ENCODE measurements at regions of chr2 and their contacts with region 1.

Region 1: GRCh38 chr2:158903711-158904443 is 64.6 kb upstream of the TANC1 start:
- DNase-seq: no peak
- ATAC-seq: no peak
- H3K4me3 Mint-ChIP-seq: no peak overlapping the region
- H3K27ac Mint-ChIP-seq: no peak overlapping the region
- H3K4me1 Mint-ChIP-seq: no peaks in the 10 kb centered on the region
- H3K27me3 Mint-ChIP-seq: no peaks in the 10 kb centered on the region

Region 2: GRCh38 chr2:158835431-158835830 is 68.4 kb before region 1 on chr2:
- CTCF ChIA-PET with region 1: no interaction called
- POLR2A ChIA-PET with region 1: no interaction called
- intact Hi-C with region 1: no loop called
- DNase-seq: no peak
- ATAC-seq: no peak
- H3K4me3 Mint-ChIP-seq: no peak overlapping the region
- H3K27ac Mint-ChIP-seq: no peak overlapping the region
- H3K4me1 Mint-ChIP-seq: no peaks in the 10 kb centered on the region
- H3K27me3 Mint-ChIP-seq: peaks cover under 1% of the 10 kb centered on the region

Region 3: DNA sequence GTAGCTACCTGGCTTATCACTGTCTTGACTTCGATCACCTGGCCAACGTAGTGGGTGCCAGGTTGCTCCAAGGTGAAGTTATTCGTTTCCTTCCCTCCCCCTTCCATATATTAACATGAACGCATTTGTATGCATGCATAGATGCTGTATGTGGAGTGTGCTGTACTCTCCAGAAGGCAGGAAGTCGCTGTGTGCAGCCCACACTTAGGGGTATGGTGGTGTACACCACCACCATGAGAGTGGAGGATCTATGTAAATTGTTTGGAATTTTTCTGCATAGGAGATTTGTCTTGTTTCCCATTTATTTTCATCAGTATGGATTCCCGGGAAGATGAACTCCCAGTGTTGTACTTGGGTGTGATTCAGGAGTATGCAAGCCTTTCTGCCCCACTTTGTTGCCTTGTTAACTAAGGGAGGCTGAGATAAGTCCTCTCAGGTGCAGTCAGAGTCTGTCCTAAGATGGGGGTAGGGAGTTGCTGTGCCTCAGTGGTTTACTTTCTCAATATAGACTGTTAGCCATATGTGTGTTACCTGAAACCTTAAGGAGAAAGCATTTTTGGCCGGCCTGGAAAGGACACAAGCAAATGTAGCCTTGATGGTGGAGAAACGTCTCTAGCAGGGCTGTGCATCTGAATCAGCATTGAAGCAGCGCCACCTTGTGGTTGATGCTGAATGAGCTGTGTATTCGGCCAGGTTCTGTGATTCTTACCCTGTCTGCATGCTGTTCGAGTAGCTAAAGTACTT is 214.4 kb after region 1 on chr2:
- CTCF ChIA-PET with region 1: interaction called, 33 read pairs
- POLR2A ChIA-PET with region 1: no interaction called
- intact Hi-C with region 1: loop called (anchors 1 kb)
- DNase-seq: peak; percentile 91
- ATAC-seq: peak; percentile 84
- H3K4me3 Mint-ChIP-seq: no peak overlapping the region
- H3K27ac Mint-ChIP-seq: no peak overlapping the region
- H3K4me1 Mint-ChIP-seq: peaks cover 6% of the 10 kb centered on the region
- H3K27me3 Mint-ChIP-seq: no peaks in the 10 kb centered on the region

Region 4: DNA sequence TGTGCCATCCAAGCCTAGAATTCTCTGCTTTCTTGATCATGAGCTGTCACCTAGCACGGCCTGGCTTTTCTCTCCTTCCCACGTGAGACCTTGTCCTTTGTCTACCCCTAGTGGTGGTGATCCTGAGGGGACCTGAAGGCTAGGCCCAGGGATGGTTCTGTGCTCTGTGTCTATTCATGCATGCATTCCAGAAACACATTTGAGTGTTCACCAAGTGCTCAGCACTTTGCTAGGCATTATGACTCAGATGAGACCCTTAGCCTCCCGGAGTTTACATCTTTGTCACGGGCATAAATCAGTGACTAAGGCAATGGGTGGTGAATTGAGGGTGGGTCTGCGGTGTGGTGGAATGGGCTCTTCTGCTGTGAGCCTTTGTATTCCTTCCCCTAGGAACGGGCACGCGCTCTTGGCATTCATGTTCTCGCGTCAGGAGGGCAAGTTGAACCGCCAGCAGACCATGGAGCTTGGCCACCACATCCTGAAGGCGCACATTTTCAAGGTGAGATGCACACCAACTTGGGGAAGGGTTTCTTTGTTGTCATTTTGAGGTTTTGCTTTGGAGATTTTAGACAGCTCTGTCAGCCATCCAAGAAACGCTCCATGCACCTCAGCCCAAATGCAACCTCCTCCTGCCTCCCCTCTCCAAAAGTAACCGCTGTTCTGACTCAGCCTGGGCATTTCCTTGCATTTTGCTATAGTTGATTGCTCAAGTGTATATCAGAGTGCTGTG is 281.7 kb after region 1 on chr2:
- CTCF ChIA-PET with region 1: no interaction called
- POLR2A ChIA-PET with region 1: no interaction called
- intact Hi-C with region 1: loop called in 1 of 2 experiments (anchors 5 kb)
- DNase-seq: peak; percentile 25
- ATAC-seq: no peak
- H3K4me3 Mint-ChIP-seq: no peak overlapping the region
- H3K27ac Mint-ChIP-seq: no peak overlapping the region
- H3K4me1 Mint-ChIP-seq: no peaks in the 10 kb centered on the region
- H3K27me3 Mint-ChIP-seq: no peaks in the 10 kb centered on the region

Region 5: GRCh38 chr2:159807183-159808031 is 903.5 kb after region 1 on chr2:
- CTCF ChIA-PET with region 1: no interaction called
- POLR2A ChIA-PET with region 1: no interaction called
- intact Hi-C with region 1: loop called in 1 of 2 experiments (anchors 5 kb)
- DNase-seq: peak; percentile 41
- ATAC-seq: no peak
- H3K4me3 Mint-ChIP-seq: no peak overlapping the region
- H3K27ac Mint-ChIP-seq: no peak overlapping the region
- H3K4me1 Mint-ChIP-seq: peaks cover 4% of the 10 kb centered on the region
- H3K27me3 Mint-ChIP-seq: no peaks in the 10 kb centered on the region

Region 6: DNA sequence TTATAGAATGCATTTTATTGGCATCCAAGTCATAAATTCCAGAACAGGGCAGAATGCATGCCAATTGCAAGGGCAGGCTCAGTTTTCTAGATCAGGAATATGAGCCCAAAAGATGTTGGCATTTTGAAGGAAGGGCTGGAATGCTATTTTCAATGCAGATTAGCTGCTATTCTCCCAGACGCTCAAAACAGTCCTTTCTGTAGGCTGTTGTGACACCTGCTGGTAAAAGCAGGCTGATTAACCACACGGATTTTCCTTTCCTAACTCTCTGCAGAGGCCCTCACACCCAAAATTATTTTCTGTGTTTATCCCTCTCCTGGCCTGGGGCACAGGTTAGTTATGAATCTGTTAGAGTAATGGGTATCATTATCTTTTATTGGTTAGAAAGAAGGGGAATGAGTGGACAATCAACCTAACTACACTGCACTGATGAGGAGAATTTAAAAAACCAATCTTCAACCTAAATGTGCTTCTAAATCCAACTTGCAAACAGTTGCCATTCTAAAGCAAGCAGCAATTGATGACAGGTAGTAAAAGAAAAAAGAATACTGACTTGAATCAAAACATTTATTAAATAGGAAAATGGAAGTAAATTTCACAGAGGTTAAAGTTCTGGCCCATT is 1064.5 kb after region 1 on chr2:
- CTCF ChIA-PET with region 1: no interaction called
- POLR2A ChIA-PET with region 1: no interaction called
- intact Hi-C with region 1: loop called (anchors 1 to 5 kb)
- DNase-seq: peak; percentile 36
- ATAC-seq: peak; percentile 66
- H3K4me3 Mint-ChIP-seq: no peak overlapping the region
- H3K27ac Mint-ChIP-seq: no peak overlapping the region
- H3K4me1 Mint-ChIP-seq: peaks cover 10% of the 10 kb centered on the region
- H3K27me3 Mint-ChIP-seq: no peaks in the 10 kb centered on the region

Region 7: DNA sequence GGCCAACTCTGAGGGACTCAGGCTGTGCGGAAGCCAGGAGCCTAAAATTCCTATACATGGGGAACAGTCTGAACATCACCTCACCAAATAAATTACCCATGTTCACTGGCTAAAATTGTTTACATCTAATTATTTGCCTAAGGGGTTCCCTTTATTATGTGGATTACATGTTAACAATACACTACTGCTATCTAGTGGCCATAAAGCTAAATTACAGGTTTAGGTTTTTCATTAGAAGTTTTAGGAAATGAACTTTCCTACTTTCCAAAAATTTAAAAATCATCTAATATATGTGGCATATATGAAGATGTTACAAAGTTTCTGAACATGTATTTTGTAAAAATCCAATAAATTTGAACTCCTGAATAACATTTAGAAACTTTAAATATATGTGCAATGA is 1118.3 kb after region 1 on chr2:
- CTCF ChIA-PET with region 1: no interaction called
- POLR2A ChIA-PET with region 1: no interaction called
- intact Hi-C with region 1: loop called in 1 of 2 experiments (anchors 5 kb)
- DNase-seq: no peak
- ATAC-seq: no peak
- H3K4me3 Mint-ChIP-seq: no peak overlapping the region
- H3K27ac Mint-ChIP-seq: no peak overlapping the region
- H3K4me1 Mint-ChIP-seq: no peaks in the 10 kb centered on the region
- H3K27me3 Mint-ChIP-seq: peaks cover 2% of the 10 kb centered on the region

Measured in activated CD4-positive, alpha-beta T cell treated with anti-CD3 and anti-CD28 coated beads for 36 hours (primary cell).